ENCODE measurements at regions of chr13 and their contacts with region 1.

Region 1: DNA sequence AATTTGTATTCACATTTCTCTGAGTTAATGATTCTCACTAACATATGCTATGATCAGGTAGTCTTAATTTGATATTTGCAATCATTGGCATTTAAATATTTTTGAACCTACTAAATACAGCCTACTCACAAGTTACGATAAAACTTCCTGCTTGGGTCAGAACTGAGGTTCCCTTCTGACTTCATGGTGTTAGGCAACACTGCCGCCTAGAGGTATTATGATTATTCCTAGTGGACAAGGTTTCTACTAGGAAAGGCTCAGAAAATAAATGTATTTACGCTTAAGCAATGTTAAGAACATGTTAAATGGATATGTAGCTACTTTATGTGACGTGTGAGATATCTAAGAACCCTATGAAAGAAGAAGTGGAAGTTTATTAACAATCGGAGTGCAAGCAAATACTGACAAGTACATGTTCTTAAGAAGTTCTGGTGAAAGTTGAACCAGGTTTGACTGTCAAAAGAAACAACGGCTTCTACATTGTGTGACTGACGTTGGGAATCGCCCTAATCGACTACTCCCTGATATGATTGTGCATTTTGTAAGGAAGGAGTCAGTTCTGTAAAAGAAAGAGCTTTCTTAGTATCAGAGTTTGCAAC is 1395.8 kb downstream of the SLITRK5 start:
- DNase-seq: peak; percentile 19
- H3K4me3 ChIP-seq: no peak overlapping the region; a peak in 1 of 4 replicates
- H3K27ac ChIP-seq: no peak overlapping the region
- H3K4me1 ChIP-seq: no peaks in the 10 kb centered on the region
- H3K27me3 ChIP-seq: no peaks in the 10 kb centered on the region
- CTCF ChIP-seq: peak; percentile 70
- EP300 ChIP-seq: no peak
- RAD21 ChIP-seq: peak; percentile 87

Region 2: GRCh38 chr13:89082623-89083022 is 15.7 kb after region 1 on chr13:
- CTCF ChIA-PET with region 1: interaction called, 10 read pairs
- POLR2A ChIA-PET with region 1: no interaction called
- DNase-seq: no peak
- H3K4me3 ChIP-seq: no peak overlapping the region
- H3K27ac ChIP-seq: no peak overlapping the region
- H3K4me1 ChIP-seq: no peaks in the 10 kb centered on the region
- H3K27me3 ChIP-seq: no peaks in the 10 kb centered on the region
- CTCF ChIP-seq: no peak
- EP300 ChIP-seq: no peak
- RAD21 ChIP-seq: no peak

Region 3: GRCh38 chr13:90008707-90009149 is 941.8 kb after region 1 on chr13:
- CTCF ChIA-PET with region 1: no interaction called
- POLR2A ChIA-PET with region 1: no interaction called
- DNase-seq: no peak
- H3K4me3 ChIP-seq: no peak overlapping the region
- H3K27ac ChIP-seq: no peak overlapping the region
- H3K4me1 ChIP-seq: no peaks in the 10 kb centered on the region
- H3K27me3 ChIP-seq: no peaks in the 10 kb centered on the region
- CTCF ChIP-seq: no peak
- EP300 ChIP-seq: no peak
- RAD21 ChIP-seq: no peak

Measured in SK-N-SH (cell line).